Activated B cell treated with CpG ODN at 0.5 μM for 24 hours (primary cell): ENCODE measurements at regions of chr22 and their contacts with region 1.

Region 1: GRCh38 chr22:46604306-46604690 is 15.9 kb upstream of the GRAMD4 start:
- DNase-seq: no peak
- ATAC-seq: peak; percentile 45
- H3K4me3 Mint-ChIP-seq: peak overlapping the region; percentile 39
- H3K27ac Mint-ChIP-seq: no peak overlapping the region
- H3K4me1 Mint-ChIP-seq: peaks cover 34% of the 10 kb centered on the region
- H3K27me3 Mint-ChIP-seq: no peaks in the 10 kb centered on the region
- CTCF ChIP-seq: no peak

Region 2: GRCh38 chr22:46690146-46690545 is 85.8 kb after region 1 on chr22:
- CTCF ChIA-PET with region 1: no interaction called
- POLR2A ChIA-PET with region 1: interaction called, 10 read pairs
- intact Hi-C with region 1: no loop called
- DNase-seq: no peak
- ATAC-seq: no peak
- H3K4me3 Mint-ChIP-seq: no peak overlapping the region
- H3K27ac Mint-ChIP-seq: no peak overlapping the region
- H3K4me1 Mint-ChIP-seq: peaks cover 15% of the 10 kb centered on the region
- H3K27me3 Mint-ChIP-seq: no peaks in the 10 kb centered on the region
- CTCF ChIP-seq: no peak